Heart right ventricle (tissue), 16 donors: ENCODE measurements at regions of chr9 and their contacts with region 1.

Region 1: GRCh38 chr9:82299870-82300269 is 311.3 kb downstream of the SPATA31D1 start:
- DNase-seq: no peak
- ATAC-seq: no peak
- H3K4me3 ChIP-seq: no peak overlapping the region
- H3K27ac ChIP-seq: no peak overlapping the region
- H3K4me1 ChIP-seq: no peaks in the 10 kb centered on the region
- H3K27me3 ChIP-seq: no peaks in the 10 kb centered on the region
- CTCF ChIP-seq: no peak

Region 2: GRCh38 chr9:81456431-81457006 is 843.4 kb before region 1 on chr9:
- intact Hi-C with region 1: loop called in 1 of 10 experiments (anchors 10 kb)
- DNase-seq: no peak
- ATAC-seq: no peak
- H3K4me3 ChIP-seq: no peak overlapping the region
- H3K27ac ChIP-seq: no peak overlapping the region
- H3K4me1 ChIP-seq: no peaks in the 10 kb centered on the region
- H3K27me3 ChIP-seq: no peaks in the 10 kb centered on the region
- CTCF ChIP-seq: no peak

Region 3: GRCh38 chr9:82247318-82247717 is 52.6 kb before region 1 on chr9:
- intact Hi-C with region 1: loop called in 1 of 10 experiments (anchors 10 kb)
- DNase-seq: peak in 1 of 2 donors; percentile 16
- ATAC-seq: peak in 4 of 8 donors; percentile 25 to 55 (median 52)
- H3K4me3 ChIP-seq: no peak overlapping the region
- H3K27ac ChIP-seq: no peak overlapping the region
- H3K4me1 ChIP-seq: no peaks in the 10 kb centered on the region
- H3K27me3 ChIP-seq: no peaks in the 10 kb centered on the region
- CTCF ChIP-seq: no peak

Region 4: GRCh38 chr9:82334286-82334685 is 34.4 kb after region 1 on chr9:
- intact Hi-C with region 1: no loop called
- DNase-seq: no peak
- ATAC-seq: no peak
- H3K4me3 ChIP-seq: no peak overlapping the region
- H3K27ac ChIP-seq: no peak overlapping the region
- H3K4me1 ChIP-seq: peaks cover 0 to 13% (median 0%) of the 10 kb centered on the region in 9 donors
- H3K27me3 ChIP-seq: no peaks in the 10 kb centered on the region
- CTCF ChIP-seq: no peak